CD14-positive monocyte (primary cell): ENCODE measurements at regions of chr1 and their contacts with region 1.

Region 1: DNA sequence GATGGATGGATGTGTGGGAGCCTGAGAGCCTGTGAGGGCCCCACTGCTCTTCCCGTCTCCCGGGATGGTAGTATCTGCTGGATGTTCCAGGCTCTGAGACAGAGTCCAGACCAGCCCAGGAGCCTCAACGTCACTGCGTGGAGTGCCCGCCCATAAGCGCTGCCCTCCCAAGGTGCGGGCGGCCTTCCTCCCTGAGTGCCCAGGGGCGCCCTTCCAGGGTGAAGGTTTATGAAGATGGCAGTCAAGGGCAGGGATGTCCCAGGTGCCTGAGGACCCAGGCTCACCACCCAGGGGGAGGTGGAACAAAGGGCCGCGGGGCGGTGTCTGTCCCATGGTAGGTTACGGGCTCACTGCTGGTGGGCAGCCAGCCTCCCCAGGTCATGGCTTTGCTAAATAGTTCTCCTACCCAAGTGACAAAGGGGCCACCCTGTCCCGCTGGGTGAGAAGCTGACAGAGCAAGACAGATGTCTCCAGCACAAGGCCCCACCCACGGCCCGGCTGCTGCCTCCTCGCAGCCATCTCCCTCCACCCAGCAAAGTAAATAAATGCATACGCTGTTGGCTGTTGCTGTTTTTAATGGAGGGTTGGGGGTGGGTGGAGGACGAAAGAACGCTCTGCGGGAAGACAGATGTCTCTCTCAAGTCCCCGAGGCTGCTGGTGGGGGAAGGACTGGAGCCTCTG is 9.0 kb upstream of the GPR153 start:
- DNase-seq: no peak
- H3K4me3 ChIP-seq: no peak overlapping the region
- H3K4me3 Mint-ChIP-seq: no peak overlapping the region
- H3K27ac ChIP-seq: no peak overlapping the region
- H3K27ac Mint-ChIP-seq: peak overlapping the region in 1 of 7 donors; percentile 46
- H3K4me1 ChIP-seq: no peaks in the 10 kb centered on the region
- H3K4me1 Mint-ChIP-seq: no peaks in the 10 kb centered on the region
- H3K27me3 ChIP-seq: no peaks in the 10 kb centered on the region
- H3K27me3 Mint-ChIP-seq: no peaks in the 10 kb centered on the region
- CTCF ChIP-seq: no peak

Region 2: GRCh38 chr1:6218375-6219164 is 51.3 kb before region 1 on chr1:
- intact Hi-C with region 1: loop called in 1 of 2 experiments (anchors 5 kb)
- DNase-seq: no peak
- H3K4me3 ChIP-seq: no peak overlapping the region
- H3K4me3 Mint-ChIP-seq: no peak overlapping the region
- H3K27ac ChIP-seq: no peak overlapping the region
- H3K27ac Mint-ChIP-seq: no peak overlapping the region
- H3K4me1 ChIP-seq: no peaks in the 10 kb centered on the region
- H3K4me1 Mint-ChIP-seq: no peaks in the 10 kb centered on the region
- H3K27me3 ChIP-seq: no peaks in the 10 kb centered on the region
- H3K27me3 Mint-ChIP-seq: peaks cover 13 to 18% (median 14%) of the 10 kb centered on the region in 3 donors
- CTCF ChIP-seq: no peak